Lower leg skin (tissue), 4 donors: ENCODE measurements at regions of chr2 and their contacts with region 1.

Region 1: DNA sequence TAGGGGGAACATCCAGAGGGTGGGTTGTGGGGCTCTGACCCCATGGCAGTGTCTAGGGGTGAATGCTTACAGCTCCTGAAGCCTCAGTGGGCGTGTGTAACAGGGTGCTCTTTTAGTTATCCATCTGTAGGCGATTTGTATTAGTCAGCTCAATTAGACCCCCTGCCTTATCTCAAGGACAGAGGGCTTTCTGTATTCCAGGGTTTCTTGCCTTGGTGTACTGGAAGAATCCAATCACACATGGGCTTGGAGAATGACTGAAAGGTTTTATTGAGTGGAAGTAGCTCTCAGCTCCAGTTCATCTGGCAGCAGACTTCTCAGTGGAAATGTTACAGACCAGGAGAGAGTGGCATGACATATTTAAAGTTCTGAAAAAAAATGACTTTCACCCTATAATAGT is 334.0 kb upstream of the GCFC2 start:
- DNase-seq: no peak
- H3K4me3 ChIP-seq: no peak overlapping the region
- CTCF ChIP-seq: no peak
- POLR2A ChIP-seq: no peak

Region 2: GRCh38 chr2:74884118-74884762 is 1160.5 kb before region 1 on chr2:
- intact Hi-C with region 1: loop called (anchors 5 kb)
- DNase-seq: peak in 1 of 2 donors; percentile 42
- H3K4me3 ChIP-seq: no peak overlapping the region
- CTCF ChIP-seq: no peak
- POLR2A ChIP-seq: no peak